Dendritic cell treated with granulocyte-macrophage colony-stimulating factor and Interleukin-4, amounts not matched to agents 40 ng/mL and 50 ng/mL, for 4 days (primary cell): ENCODE measurements at regions of chr15 and their contacts with region 1.

Region 1: GRCh38 chr15:60890375-60891230 is 338.5 kb downstream of the RORA start:
- H3K4me3 Mint-ChIP-seq: no peak overlapping the region
- H3K27ac Mint-ChIP-seq: no peak overlapping the region
- H3K4me1 Mint-ChIP-seq: no peaks in the 10 kb centered on the region
- H3K27me3 Mint-ChIP-seq: no peaks in the 10 kb centered on the region

Region 2: GRCh38 chr15:60939389-60939788 is 48.8 kb after region 1 on chr15:
- intact Hi-C with region 1: loop called (anchors 2 kb)
- H3K4me3 Mint-ChIP-seq: no peak overlapping the region
- H3K27ac Mint-ChIP-seq: no peak overlapping the region
- H3K4me1 Mint-ChIP-seq: no peaks in the 10 kb centered on the region
- H3K27me3 Mint-ChIP-seq: no peaks in the 10 kb centered on the region

Region 3: DNA sequence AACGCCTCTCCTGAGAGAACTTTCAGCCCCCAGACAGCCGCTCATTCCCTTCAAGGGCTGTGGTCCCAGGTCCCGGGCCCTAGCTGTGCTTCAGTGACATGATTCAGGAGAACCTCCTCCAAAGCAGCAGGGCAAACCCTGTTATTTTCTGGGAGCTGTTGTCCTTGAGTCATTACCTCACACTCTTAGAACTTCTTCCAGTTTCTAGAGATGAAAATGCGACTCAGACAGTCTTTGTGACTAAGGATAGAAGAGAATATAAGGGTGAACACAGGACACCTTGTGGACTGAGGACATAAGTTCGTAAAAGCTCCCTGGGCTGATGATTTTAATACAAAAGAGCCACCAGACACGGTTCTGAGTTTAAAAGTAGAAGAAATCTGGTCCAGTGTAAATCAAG is 134.7 kb after region 1 on chr15:
- intact Hi-C with region 1: no loop called
- H3K4me3 Mint-ChIP-seq: no peak overlapping the region
- H3K27ac Mint-ChIP-seq: no peak overlapping the region
- H3K4me1 Mint-ChIP-seq: no peaks in the 10 kb centered on the region
- H3K27me3 Mint-ChIP-seq: no peaks in the 10 kb centered on the region

Region 4: GRCh38 chr15:61038387-61038786 is 147.8 kb after region 1 on chr15:
- intact Hi-C with region 1: no loop called
- H3K4me3 Mint-ChIP-seq: no peak overlapping the region
- H3K27ac Mint-ChIP-seq: no peak overlapping the region
- H3K4me1 Mint-ChIP-seq: peaks cover 22% of the 10 kb centered on the region
- H3K27me3 Mint-ChIP-seq: no peaks in the 10 kb centered on the region